Ascending aorta (tissue), 2 donors: ENCODE measurements at regions of chr7 and their contacts with region 1.

Region 1: GRCh38 chr7:94395141-94396036 is 694 bp downstream of the COL1A2 start:
- DNase-seq: peak in 1 of 2 donors; percentile 78
- H3K4me3 ChIP-seq: peak overlapping the region; percentile 74 to 80
- H3K27ac ChIP-seq: peak overlapping the region; percentile 91 to 97
- H3K4me1 ChIP-seq: peaks cover 3 to 40% of the 10 kb centered on the region in 2 donors
- H3K27me3 ChIP-seq: no peaks in the 10 kb centered on the region
- CTCF ChIP-seq: peak; percentile 81 to 86 (median 84)

Region 2: GRCh38 chr7:93810561-93810960 is 584.8 kb before region 1 on chr7:
- intact Hi-C with region 1: no loop called
- DNase-seq: no peak
- H3K4me3 ChIP-seq: no peak overlapping the region
- H3K27ac ChIP-seq: no peak overlapping the region
- H3K4me1 ChIP-seq: peaks cover 0 to 2% of the 10 kb centered on the region in 2 donors
- H3K27me3 ChIP-seq: no peaks in the 10 kb centered on the region
- CTCF ChIP-seq: no peak

Region 3: GRCh38 chr7:94183289-94183749 is 212.1 kb before region 1 on chr7:
- intact Hi-C with region 1: loop called (anchors 10 kb)
- DNase-seq: no peak
- H3K4me3 ChIP-seq: no peak overlapping the region
- H3K27ac ChIP-seq: peak overlapping the region; percentile 65 to 79
- H3K4me1 ChIP-seq: peaks cover 0 to 7% of the 10 kb centered on the region in 2 donors
- H3K27me3 ChIP-seq: no peaks in the 10 kb centered on the region
- CTCF ChIP-seq: no peak

Region 4: DNA sequence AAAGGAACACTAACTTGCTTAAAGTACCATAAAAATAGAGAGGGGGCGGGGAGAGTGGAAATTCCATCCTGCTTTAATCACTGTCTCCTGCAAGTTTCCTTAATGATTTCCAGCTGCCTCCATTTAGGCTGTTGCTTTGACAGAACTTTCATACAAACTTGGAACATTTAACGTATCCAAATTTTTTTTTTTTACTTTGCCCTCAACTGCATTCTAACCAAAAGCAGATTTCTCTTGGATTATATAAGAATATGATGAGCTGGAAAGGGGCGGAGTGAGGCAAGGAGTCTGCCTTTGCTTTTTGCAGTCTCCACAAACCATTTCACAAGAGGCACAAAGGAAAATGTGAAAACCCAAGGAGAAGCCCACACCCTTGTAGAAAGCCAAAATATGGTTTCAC is 47.2 kb before region 1 on chr7:
- intact Hi-C with region 1: loop called (anchors 2 kb)
- DNase-seq: peak in 1 of 2 donors; percentile 74
- H3K4me3 ChIP-seq: peak overlapping the region; percentile 20 to 36
- H3K27ac ChIP-seq: peak overlapping the region; percentile 72 to 73
- H3K4me1 ChIP-seq: peaks cover 0 to 18% of the 10 kb centered on the region in 2 donors
- H3K27me3 ChIP-seq: no peaks in the 10 kb centered on the region
- CTCF ChIP-seq: no peak

Region 5: DNA sequence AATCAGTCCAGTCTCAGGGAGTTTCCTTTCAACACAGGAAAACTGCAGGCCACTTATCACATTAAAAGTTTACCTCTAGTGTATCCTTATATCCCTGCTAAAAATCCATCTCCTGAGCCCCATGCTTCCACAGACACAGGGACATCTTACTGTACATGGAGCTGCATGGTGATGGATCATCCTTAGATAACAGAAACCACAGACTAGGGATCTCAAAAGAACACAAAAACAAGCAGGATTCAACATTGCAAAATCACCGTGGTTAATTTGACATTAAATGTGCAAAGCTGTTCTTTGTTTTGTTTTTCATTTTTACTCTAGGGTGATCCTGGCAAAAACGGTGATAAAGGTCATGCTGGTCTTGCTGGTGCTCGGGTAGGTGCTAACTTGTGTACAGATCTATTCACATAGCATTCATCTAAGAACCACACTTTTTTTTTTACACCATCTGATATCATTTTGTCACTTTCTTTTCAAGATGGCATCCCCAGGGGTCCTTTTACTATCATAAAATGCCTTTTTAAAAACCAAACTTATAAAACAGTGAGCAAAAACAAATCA is 17.5 kb after region 1 on chr7:
- intact Hi-C with region 1: loop called (anchors 2 kb)
- DNase-seq: no peak
- H3K4me3 ChIP-seq: no peak overlapping the region
- H3K27ac ChIP-seq: peak overlapping the region; percentile 44 to 79
- H3K4me1 ChIP-seq: peaks cover 14 to 21% of the 10 kb centered on the region in 2 donors
- H3K27me3 ChIP-seq: no peaks in the 10 kb centered on the region
- CTCF ChIP-seq: no peak